ENCODE measurements at regions of chr3 and their contacts with region 1.

Region 1: GRCh38 chr3:29642393-29643033 is 361.6 kb downstream of the RBMS3 start:
- DNase-seq: peak in 4 of 5 donors; percentile 25 to 63 (median 32)
- ATAC-seq: peak; percentile 86 to 97 (median 94)
- H3K4me3 ChIP-seq: peak overlapping the region in 5 of 12 donors; percentile 5 to 26 (median 20)
- H3K27ac ChIP-seq: peak overlapping the region; percentile 37 to 92 (median 76)
- H3K4me1 ChIP-seq: peaks cover 0 to 69% (median 28%) of the 10 kb centered on the region in 12 donors
- H3K27me3 ChIP-seq: no peaks in the 10 kb centered on the region
- CTCF ChIP-seq: no peak
- POLR2A ChIP-seq: no peak

Region 2: DNA sequence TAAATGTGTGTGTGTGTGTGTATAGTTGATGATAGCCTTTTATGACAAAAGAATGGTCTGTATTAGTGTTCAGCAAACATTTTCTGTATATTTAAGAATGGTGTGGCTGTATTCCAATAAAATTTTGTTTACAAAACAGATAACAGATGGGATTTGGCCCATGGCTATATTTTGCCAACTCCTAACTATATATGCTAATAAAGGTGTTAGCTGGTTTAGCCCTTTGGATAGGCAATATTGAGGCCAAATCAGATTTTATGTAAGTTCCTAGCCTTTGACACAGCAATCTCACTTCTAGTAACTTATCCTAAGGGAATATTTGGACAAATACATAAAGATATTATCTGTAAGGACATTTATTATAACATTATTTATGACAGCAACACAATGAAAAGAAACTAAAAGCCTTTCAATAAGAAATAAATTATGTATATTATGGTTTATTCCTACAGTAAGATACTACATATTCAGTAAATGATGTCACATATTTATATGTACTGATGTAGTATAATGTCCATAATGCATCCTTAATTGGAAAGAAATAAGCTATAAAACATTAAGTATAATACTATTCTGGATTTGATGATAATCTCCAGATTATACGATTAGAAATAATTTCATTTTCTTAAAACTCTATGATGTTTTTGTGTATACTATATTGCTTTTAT is 97.7 kb before region 1 on chr3:
- intact Hi-C with region 1: loop called in 1 of 10 experiments (anchors 10 kb)
- DNase-seq: no peak
- ATAC-seq: no peak
- H3K4me3 ChIP-seq: no peak overlapping the region
- H3K27ac ChIP-seq: no peak overlapping the region
- H3K4me1 ChIP-seq: peaks cover 0 to 23% (median 3%) of the 10 kb centered on the region in 12 donors
- H3K27me3 ChIP-seq: no peaks in the 10 kb centered on the region
- CTCF ChIP-seq: no peak
- POLR2A ChIP-seq: no peak

Region 3: GRCh38 chr3:29683018-29683993 is 40.8 kb after region 1 on chr3:
- intact Hi-C with region 1: loop called in 1 of 10 experiments (anchors 5 kb)
- DNase-seq: peak in 1 of 5 donors; percentile 15
- ATAC-seq: peak; percentile 69 to 83 (median 81)
- H3K4me3 ChIP-seq: peak overlapping the region in 3 of 12 donors; percentile 13 to 16 (median 15)
- H3K27ac ChIP-seq: peak overlapping the region; percentile 34 to 85 (median 73)
- H3K4me1 ChIP-seq: peaks cover 0 to 44% (median 28%) of the 10 kb centered on the region in 12 donors
- H3K27me3 ChIP-seq: no peaks in the 10 kb centered on the region
- CTCF ChIP-seq: no peak
- POLR2A ChIP-seq: no peak

Region 4: DNA sequence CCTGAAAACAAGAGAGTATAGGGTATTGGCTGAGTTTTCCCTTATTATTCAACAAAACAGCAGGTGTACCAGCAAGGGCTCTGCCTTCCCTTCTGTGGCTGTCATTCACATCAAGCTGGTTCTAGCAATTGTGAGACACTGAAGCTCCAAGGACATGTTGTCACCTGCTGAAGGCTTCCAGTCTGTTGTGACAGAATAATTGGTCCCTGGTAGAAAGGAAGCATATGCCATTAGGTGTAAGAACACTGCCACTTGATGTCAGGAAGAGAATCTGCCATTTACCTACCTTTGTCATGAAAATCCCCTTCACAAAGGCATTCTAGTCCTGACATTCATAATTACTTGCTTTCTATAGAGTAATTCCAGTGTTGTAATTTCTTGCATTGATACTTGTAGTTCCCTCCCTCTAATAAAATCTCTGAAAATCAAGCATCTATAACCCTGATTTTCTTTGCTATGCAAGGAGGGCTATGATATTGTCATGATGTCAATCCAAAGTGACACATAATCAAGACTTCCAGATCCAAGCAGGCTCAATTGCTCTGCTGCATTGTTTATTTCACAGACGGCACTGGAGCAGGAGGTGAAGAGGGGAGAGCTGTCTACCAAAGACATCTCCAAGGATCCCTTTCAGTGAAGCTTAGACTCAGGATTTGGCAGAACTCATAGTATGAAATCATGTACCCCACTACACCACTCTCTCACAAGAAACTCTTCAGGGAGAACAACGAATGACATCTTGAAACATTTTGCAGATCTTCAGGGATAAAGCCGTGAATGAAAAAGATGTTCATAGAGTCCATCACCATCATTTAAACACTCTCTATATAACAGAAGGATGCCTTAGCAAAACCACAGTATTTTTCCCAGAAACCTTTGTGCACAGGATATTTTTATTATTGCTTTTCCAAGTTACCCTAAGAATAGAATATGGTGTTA is 63.7 kb after region 1 on chr3:
- intact Hi-C with region 1: loop called in 1 of 10 experiments (anchors 5 kb)
- DNase-seq: no peak
- ATAC-seq: no peak
- H3K4me3 ChIP-seq: no peak overlapping the region
- H3K27ac ChIP-seq: peak overlapping the region in 1 of 12 donors; percentile 21
- H3K4me1 ChIP-seq: peaks cover 0 to 52% (median 16%) of the 10 kb centered on the region in 12 donors
- H3K27me3 ChIP-seq: no peaks in the 10 kb centered on the region
- CTCF ChIP-seq: no peak
- POLR2A ChIP-seq: no peak

Region 5: GRCh38 chr3:29716213-29716612 is 73.7 kb after region 1 on chr3:
- intact Hi-C with region 1: no loop called
- DNase-seq: no peak
- ATAC-seq: no peak
- H3K4me3 ChIP-seq: no peak overlapping the region
- H3K27ac ChIP-seq: no peak overlapping the region
- H3K4me1 ChIP-seq: peaks cover 0 to 31% (median 10%) of the 10 kb centered on the region in 12 donors
- H3K27me3 ChIP-seq: no peaks in the 10 kb centered on the region
- CTCF ChIP-seq: no peak
- POLR2A ChIP-seq: no peak

Measured in heart left ventricle (tissue), 16 donors.